Prostate gland (tissue), 2 donors: ENCODE measurements at regions of chr1 and their contacts with region 1.

Region 1: DNA sequence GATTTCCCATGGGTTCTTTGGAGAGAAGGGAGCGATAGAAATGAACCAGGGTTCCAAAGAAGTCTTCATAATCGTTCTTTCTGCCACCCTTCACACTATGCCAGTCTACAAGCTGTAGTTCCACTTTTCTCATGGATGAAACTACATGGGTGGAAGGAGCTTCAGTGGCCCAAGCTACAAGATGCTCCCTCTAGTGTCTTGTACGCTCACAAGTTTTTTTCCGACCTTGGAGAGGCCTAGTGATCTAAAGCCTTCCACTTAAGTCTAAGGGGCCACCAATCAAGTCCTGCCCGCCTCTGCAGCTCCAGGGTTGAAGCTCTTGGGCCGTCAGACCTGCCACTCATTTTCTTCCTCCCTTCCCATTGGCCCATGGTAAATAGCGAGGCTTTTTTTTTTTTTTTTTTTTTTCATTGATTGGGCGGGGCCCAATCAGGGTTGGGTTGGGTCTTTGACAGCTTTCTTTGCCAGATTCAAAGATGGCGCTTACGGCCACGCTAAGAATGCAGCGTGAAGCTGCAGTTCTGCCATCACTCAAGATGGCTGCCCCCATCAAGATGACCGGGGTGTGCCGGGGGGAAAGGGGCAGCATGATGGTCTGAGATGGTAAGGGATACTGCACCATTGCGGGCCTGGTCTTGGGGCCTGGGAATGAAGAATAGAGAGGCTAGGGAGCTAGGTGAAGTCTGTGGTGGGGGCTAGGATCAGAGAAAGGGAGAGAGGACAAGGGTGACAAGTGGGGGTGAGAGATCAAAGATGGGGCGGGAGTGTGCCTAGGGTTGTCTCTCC is at the start of gene TOMM40L:
- DNase-seq: peak; percentile 85
- H3K4me3 ChIP-seq: peak within 1 kb of the TSS; percentile 57 to 58
- H3K27ac ChIP-seq: peak within 1 kb of the TSS; percentile 58 to 67
- H3K4me1 ChIP-seq: peaks cover 4% of the 10 kb centered on the region
- H3K27me3 ChIP-seq: no peaks in the 10 kb centered on the region
- CTCF ChIP-seq: peak in 3 of 4 experiments; percentile 31 to 49 (median 47)
- POLR2A ChIP-seq: peak; percentile 14
- total RNA-seq, gene TOMM40L: 7.5 to 15.6 TPM

Region 2: GRCh38 chr1:161367684-161368400 is 142.1 kb after region 1 on chr1 and contains the start of gene CFAP126:
- intact Hi-C with region 1: loop called (anchors 5 kb)
- DNase-seq: peak; percentile 69
- H3K4me3 ChIP-seq: no peak within 1 kb of the TSS
- H3K27ac ChIP-seq: peak within 1 kb of the TSS in 1 of 2 donors; percentile 37
- H3K4me1 ChIP-seq: no peaks in the 10 kb centered on the region
- H3K27me3 ChIP-seq: no peaks in the 10 kb centered on the region
- CTCF ChIP-seq: peak in 2 of 4 experiments; percentile 31 to 35
- POLR2A ChIP-seq: no peak
- total RNA-seq, gene CFAP126: not detected

Region 3: DNA sequence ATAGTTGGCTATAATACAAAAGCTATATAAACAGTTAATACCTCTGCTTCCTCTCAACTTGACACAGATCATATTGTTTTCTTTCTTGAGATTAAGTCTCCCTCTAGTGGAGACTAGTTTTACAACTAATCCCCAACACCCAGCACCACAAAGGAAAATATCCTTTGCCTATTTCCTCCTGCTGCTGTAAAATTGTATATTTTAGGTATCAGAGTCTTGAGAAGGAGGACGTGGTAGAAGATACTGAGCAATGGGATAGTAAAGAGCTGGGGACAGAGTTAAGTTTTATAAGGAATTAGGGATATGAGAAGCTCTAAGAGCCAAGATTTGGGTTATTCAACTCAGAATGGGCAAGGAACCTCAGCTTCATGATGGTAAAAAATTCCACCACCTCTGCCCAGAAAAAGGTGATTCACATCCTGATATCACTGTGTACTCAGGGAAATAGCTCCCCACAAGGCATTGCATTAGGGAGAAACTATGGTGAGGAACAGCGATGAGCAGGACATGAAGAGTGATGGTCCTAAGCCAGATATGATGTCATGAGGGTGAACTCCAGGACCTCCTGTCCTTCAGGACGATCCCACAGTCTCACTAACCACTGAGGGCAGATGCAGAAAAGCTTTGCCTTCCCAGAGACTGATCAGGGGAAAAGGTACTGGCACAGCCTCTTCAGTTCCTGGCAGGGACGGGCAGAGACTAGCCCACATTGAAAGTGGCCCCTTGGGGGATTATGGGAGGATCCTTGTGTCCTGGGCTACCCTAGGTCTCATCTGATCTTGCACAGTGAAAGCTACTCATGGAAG is 156.7 kb after region 1 on chr1:
- intact Hi-C with region 1: loop called (anchors 2 kb)
- DNase-seq: peak; percentile 16
- H3K4me3 ChIP-seq: no peak overlapping the region
- H3K27ac ChIP-seq: peak overlapping the region in 1 of 2 donors; percentile 65
- H3K4me1 ChIP-seq: no peaks in the 10 kb centered on the region
- H3K27me3 ChIP-seq: no peaks in the 10 kb centered on the region
- CTCF ChIP-seq: peak; percentile 48 to 81 (median 74)
- POLR2A ChIP-seq: no peak